ENCODE measurements at regions of chr20 and their contacts with region 1.

Region 1: GRCh38 chr20:50625986-50626677 is 65.2 kb downstream of the RIPOR3 start:
- DNase-seq: peak; percentile 78
- ATAC-seq: peak; percentile 76

Region 2: DNA sequence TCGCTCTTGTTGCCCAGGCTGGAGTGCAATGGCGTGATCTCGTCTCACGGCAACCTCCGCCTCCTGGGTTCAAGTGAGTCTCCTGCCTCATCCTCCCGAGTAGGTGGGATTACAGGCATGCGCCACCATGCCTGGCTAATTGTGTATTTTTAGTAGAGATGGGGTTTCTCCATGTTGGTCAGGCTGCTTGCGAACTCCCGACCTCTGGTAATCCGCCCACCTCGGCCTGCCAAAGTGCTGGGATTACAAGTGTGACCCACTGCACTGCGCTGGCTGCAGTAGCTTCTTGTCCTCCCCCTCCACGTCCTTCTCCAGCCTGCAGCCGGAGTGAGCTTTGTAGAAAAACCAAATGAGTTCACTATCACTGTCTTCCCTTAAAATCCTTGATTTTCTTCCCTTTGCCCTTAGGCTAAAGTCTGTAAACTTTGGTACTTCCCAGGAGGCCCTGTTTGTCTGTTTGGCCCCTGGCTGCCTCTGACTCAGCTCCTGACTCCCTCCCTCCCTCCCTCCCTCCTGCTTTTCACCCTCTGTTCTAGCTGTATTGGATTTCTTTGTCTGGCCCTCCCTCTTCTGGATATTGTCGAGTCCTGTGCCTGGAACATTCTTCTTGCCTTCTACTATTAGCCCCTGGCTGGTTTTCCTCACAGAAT is 118.1 kb after region 1 on chr20:
- intact Hi-C with region 1: loop called (anchors 10 kb)
- DNase-seq: peak; percentile 67
- ATAC-seq: peak; percentile 86

Region 3: DNA sequence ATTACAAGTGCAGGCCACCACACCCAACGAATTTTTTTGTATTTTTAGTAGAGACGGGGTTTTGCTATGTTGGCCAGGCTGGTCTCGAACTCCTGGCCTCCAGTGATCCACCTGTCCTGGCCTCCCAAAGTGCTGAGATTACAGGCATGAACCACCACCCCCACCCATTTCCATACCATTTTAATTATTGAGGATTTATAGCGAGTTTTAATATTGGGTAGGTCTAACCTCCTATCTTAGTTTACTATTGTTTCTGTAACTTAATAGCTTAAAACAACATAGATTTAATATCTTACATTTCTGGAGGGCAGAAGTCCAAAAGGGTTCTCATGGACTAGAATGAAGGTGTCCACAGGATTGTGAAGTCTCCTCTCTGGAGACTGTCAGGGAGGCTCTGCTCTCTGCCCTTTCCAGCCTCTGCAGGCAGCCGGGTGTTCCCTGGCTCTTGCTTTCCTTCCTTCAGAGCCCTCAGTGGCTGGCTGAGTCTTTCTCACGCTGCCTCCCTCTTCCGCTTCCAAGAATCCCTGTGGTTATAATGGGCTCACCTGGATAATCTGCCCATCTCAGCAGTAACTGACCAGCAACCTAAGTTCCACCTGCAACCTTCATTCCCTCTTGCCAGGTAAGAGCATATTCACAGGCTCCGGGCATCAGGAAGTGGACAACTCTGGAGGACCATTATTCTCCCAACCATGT is 150.1 kb after region 1 on chr20:
- intact Hi-C with region 1: no loop called
- DNase-seq: no peak
- ATAC-seq: no peak